ENCODE measurements at regions of chr6 and their contacts with region 1.

Region 1: DNA sequence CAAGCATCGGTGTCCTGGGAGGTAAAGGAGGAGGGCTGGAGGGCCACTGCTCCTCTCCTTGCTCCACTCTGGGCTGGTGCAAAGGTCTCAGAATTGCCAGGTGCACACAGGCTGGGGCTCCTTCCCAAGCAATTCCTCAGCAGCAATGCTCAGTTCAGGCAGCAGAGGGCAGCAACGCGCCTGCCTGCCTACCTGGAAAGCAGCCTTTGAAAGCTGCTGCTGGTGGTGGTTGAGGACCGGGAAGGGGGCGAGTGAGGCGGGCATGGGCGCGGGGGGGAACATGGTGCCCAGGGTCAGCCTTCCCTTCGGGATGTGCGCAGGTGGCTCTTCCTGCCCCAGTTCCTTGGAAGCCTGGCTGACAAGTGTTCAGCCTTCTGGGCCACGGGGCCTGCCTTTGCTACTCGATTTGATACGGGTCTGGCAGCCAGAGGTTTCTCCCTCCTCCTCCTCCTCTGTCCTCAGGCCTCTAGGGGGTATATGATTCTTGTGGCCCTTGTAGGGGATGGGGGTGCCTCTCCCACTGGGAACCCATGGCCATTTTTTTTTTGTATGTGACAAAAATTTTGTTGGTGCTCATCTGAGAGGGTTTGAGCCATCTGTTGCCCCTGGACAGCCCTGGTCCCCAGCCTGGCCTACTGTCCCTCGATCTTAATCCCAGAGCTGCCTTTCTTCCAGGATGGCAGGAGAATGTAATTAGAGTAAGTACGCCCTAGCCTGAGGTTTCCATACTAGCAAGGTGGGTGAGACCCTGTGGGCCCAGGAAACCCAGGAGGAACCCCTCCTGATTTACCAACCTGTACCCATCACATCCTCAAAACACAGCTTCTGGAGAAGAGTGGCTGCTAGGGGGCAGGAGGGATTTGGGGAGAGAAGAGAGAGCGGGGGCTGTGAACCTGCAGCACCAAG is 20.1 kb downstream of the MRPS18A start:
- DNase-seq: peak; percentile 87
- ATAC-seq: peak; percentile 76
- H3K4me3 Mint-ChIP-seq: peak overlapping the region; percentile 28
- H3K27ac Mint-ChIP-seq: peak overlapping the region; percentile 86
- H3K4me1 Mint-ChIP-seq: peaks cover 49% of the 10 kb centered on the region
- H3K27me3 Mint-ChIP-seq: no peaks in the 10 kb centered on the region

Region 2: GRCh38 chr6:43608310-43608763 is 59.2 kb before region 1 on chr6:
- CTCF ChIA-PET with region 1: interaction called, 11 read pairs
- POLR2A ChIA-PET with region 1: no interaction called
- DNase-seq: peak; percentile 72
- ATAC-seq: peak; percentile 42
- H3K4me3 Mint-ChIP-seq: no peak overlapping the region
- H3K27ac Mint-ChIP-seq: no peak overlapping the region
- H3K4me1 Mint-ChIP-seq: peaks cover 3% of the 10 kb centered on the region
- H3K27me3 Mint-ChIP-seq: no peaks in the 10 kb centered on the region

Region 3: GRCh38 chr6:43644931-43645612 is 22.4 kb before region 1 on chr6 and contains the start of gene RSPH9:
- CTCF ChIA-PET with region 1: interaction called, 13 read pairs
- POLR2A ChIA-PET with region 1: interaction called, 6 read pairs
- DNase-seq: peak; percentile 72
- ATAC-seq: peak; percentile 88
- H3K4me3 Mint-ChIP-seq: peak within 1 kb of the TSS; percentile 60
- H3K27ac Mint-ChIP-seq: no peak within 1 kb of the TSS
- H3K4me1 Mint-ChIP-seq: peaks cover 24% of the 10 kb centered on the region
- H3K27me3 Mint-ChIP-seq: no peaks in the 10 kb centered on the region
- total RNA-seq, gene RSPH9: not detected

Region 4: DNA sequence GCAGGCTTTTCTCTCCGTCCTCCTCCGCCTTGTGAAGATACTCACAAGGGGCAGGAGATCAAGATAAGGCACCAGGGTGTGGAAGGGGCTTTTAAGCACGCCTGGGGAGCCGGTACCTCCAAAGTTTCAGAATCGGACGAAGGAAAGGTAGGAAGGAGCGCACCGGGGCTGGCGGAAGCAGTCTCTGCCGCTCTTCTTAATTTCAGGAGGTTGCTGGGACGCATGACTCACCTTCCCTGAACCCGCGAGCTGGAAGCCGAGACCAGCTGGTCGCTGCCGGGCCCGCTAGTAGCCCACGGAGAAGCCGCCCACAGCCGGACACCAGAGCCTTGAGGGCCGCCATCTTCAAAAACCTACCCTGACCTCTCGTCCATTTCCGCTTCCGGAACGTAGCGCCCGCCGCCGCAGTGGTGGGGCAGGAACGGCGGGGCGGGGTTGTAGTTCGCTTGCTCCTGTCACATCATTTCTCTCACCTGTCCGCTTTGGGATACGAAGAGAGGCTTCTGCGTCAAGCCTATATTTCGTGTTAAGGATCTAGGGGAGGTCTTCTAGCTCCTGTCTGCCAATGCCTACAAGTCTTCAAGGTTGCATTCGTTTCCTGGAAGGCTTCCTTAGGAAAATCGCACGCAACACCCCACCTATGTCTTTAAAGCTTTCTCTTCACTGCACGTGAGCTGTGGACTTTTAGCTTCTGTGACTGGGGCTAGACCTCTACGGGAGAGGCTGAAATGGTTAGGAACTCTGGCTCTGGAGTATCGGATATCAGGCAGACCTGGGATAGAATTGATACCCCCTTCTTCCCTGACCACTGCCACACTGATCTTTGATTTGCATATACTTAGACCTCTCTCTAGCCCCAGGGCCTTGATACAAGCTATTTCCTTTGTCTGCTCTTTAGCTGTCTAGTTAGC is 20.2 kb after region 1 on chr6 and contains the start of gene MRPS18A:
- CTCF ChIA-PET with region 1: interaction called, 71 read pairs
- POLR2A ChIA-PET with region 1: interaction called, 5 read pairs
- DNase-seq: peak; percentile 88
- ATAC-seq: peak; percentile 99
- H3K4me3 Mint-ChIP-seq: peak within 1 kb of the TSS; percentile 95
- H3K27ac Mint-ChIP-seq: peak within 1 kb of the TSS; percentile 89
- H3K4me1 Mint-ChIP-seq: peaks cover 44% of the 10 kb centered on the region
- H3K27me3 Mint-ChIP-seq: no peaks in the 10 kb centered on the region
- total RNA-seq, gene MRPS18A: 38.7 to 43.2 TPM

Region 5: DNA sequence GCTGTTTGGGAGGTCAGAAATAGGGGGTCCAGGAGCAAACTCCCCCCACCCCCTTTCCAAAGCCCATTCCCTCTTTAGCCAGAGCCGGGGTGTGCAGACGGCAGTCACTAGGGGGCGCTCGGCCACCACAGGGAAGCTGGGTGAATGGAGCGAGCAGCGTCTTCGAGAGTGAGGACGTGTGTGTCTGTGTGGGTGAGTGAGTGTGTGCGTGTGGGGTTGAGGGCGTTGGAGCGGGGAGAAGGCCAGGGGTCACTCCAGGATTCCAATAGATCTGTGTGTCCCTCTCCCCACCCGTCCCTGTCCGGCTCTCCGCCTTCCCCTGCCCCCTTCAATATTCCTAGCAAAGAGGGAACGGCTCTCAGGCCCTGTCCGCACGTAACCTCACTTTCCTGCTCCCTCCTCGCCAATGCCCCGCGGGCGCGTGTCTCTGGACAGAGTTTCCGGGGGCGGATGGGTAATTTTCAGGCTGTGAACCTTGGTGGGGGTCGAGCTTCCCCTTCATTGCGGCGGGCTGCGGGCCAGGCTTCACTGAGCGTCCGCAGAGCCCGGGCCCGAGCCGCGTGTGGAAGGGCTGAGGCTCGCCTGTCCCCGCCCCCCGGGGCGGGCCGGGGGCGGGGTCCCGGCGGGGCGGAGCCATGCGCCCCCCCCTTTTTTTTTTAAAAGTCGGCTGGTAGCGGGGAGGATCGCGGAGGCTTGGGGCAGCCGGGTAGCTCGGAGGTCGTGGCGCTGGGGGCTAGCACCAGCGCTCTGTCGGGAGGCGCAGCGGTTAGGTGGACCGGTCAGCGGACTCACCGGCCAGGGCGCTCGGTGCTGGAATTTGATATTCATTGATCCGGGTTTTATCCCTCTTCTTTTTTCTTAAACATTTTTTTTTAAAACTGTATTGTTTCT is 102.3 kb after region 1 on chr6 and contains the start of gene VEGFA:
- CTCF ChIA-PET with region 1: interaction called, 64 read pairs
- POLR2A ChIA-PET with region 1: interaction called, 3 read pairs
- DNase-seq: peak; percentile 92
- ATAC-seq: peak; percentile 73
- H3K4me3 Mint-ChIP-seq: peak within 1 kb of the TSS; percentile 97
- H3K27ac Mint-ChIP-seq: peak within 1 kb of the TSS; percentile 85
- H3K4me1 Mint-ChIP-seq: peaks cover 38% of the 10 kb centered on the region
- H3K27me3 Mint-ChIP-seq: peaks cover 9% of the 10 kb centered on the region
- total RNA-seq, gene VEGFA: 37.9 to 39.3 TPM

Region 6: GRCh38 chr6:44074439-44075136 is 407.1 kb after region 1 on chr6:
- CTCF ChIA-PET with region 1: interaction called, 43 read pairs
- POLR2A ChIA-PET with region 1: no interaction called
- DNase-seq: peak; percentile 86
- ATAC-seq: peak; percentile 72
- H3K4me3 Mint-ChIP-seq: peak overlapping the region; percentile 93
- H3K27ac Mint-ChIP-seq: peak overlapping the region; percentile 73
- H3K4me1 Mint-ChIP-seq: peaks cover 25% of the 10 kb centered on the region
- H3K27me3 Mint-ChIP-seq: peaks cover 19% of the 10 kb centered on the region